ENCODE measurements at regions of chr15 and their contacts with region 1.

Region 1: DNA sequence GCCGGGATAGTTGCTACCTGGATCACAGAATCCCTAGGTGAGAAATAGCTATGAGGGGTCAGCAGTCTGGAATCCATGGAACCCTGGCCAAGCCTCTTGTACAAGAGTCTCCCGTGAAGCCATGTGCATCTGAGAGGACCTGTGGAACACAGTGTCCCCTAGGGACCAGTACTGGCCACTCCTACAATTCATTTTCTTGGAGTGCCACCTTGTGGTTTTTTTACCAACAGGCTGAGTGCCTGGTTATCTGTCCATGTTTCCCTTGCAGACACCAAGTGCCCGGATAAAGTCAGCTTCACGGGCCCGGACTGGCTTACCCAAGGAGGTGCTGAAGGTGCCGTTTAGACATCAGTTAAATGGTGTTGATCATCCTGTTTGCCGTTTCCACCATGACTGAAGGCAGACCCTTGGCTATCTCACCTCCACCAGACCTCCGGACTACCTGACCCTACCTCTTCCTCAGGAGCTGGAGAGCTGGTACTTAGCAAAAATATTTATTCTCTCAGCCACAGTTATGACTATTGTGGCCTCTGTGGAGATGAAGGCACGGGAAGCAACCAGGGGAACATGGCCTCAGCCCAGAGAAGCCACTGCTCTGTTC is 93.9 kb downstream of the RBPMS2 start:
- DNase-seq: no peak
- ATAC-seq: peak; percentile 82

Region 2: GRCh38 chr15:64209680-64210334 is 471.7 kb before region 1 on chr15:
- intact Hi-C with region 1: loop called (anchors 10 kb)
- DNase-seq: no peak
- ATAC-seq: no peak

Region 3: DNA sequence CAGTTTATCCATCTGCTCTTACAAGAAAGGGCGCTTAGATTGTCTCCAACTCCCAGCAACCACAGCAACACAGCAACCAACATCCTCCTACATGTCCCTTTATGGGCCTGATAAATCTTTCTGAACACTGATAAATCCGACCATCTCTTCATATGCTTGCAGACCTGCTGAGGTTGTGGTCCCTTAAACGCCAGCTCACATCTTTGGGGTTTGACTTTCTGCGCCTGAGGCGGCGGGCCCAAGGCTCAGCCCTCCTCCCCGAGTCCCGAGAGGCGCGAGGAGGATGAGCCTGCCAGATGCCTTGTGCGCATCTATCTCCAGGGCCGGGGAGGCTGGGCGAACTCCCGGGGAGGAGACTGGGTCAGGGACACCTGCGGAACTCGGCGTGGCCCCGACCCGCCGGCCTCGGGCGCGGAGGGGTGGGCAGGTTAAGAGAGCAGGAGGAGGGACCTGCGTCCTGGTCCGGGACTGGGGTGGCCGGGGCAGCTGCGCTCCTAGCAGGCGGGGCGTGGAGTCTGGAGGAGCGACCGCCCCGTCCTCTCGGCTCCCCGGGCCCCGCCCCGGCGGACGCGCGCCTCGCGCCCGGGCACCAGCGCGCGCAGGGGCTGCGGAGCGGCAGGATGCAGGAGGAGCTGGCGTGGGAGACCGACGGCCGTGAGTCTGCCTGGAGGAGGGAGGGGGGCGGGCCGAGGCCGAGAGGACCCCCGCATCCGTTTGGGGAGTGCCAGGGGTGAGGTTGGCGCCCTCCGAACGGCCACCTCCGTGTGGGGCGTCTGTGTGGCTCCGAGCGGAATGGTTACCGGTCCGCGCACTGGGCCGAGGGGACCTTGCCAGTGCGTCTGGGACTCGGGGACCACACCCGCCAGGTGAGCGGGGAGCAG is 230.0 kb after region 1 on chr15 and contains the start of gene ANKDD1A:
- intact Hi-C with region 1: no loop called
- DNase-seq: peak; percentile 79
- ATAC-seq: peak; percentile 95
- total RNA-seq, gene ANKDD1A: 1.4 TPM